ENCODE measurements at regions of chr2 and their contacts with region 1.

Region 1: GRCh38 chr2:109486711-109487535 is 126.8 kb downstream of the SEPTIN10 start:
- DNase-seq: peak; percentile 67
- H3K4me3 ChIP-seq: no peak overlapping the region
- H3K27ac ChIP-seq: peak overlapping the region; percentile 75
- H3K4me1 ChIP-seq: peaks cover 33% of the 10 kb centered on the region
- H3K27me3 ChIP-seq: no peaks in the 10 kb centered on the region
- CTCF ChIP-seq: no peak
- POLR2A ChIP-seq: no peak

Region 2: DNA sequence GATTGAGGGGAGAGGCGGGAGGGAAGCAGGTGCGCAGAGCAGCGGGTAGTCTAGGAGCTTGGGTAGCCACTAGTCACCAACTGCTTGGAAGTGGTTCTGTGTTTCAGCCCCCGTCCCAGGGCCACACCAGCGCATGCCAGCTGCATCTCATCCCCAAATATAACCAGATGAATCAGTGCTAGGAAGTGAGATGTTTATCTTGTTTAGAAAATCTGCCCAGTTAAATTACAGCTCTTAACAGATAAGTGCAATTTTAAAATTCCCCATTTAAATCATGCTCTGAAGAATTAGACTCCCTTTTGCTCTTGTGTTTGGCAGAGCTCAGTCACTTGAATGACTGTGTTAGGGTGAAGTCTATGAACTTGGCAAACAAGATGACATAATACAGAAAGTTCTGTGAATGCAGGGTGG is 67.0 kb before region 1 on chr2:
- CTCF ChIA-PET with region 1: no interaction called
- POLR2A ChIA-PET with region 1: no interaction called
- dilution Hi-C with region 1: no loop called
- intact Hi-C with region 1: no loop called
- DNase-seq: peak; percentile 43
- H3K4me3 ChIP-seq: no peak overlapping the region
- H3K27ac ChIP-seq: no peak overlapping the region
- H3K4me1 ChIP-seq: peaks cover 3% of the 10 kb centered on the region
- H3K27me3 ChIP-seq: no peaks in the 10 kb centered on the region
- CTCF ChIP-seq: no peak
- POLR2A ChIP-seq: no peak

Region 3: GRCh38 chr2:109438773-109439389 is 48.0 kb before region 1 on chr2:
- CTCF ChIA-PET with region 1: no interaction called
- POLR2A ChIA-PET with region 1: no interaction called
- dilution Hi-C with region 1: no loop called
- intact Hi-C with region 1: no loop called
- DNase-seq: no peak
- H3K4me3 ChIP-seq: no peak overlapping the region
- H3K27ac ChIP-seq: no peak overlapping the region
- H3K4me1 ChIP-seq: no peaks in the 10 kb centered on the region
- H3K27me3 ChIP-seq: no peaks in the 10 kb centered on the region
- CTCF ChIP-seq: no peak
- POLR2A ChIP-seq: no peak

Region 4: DNA sequence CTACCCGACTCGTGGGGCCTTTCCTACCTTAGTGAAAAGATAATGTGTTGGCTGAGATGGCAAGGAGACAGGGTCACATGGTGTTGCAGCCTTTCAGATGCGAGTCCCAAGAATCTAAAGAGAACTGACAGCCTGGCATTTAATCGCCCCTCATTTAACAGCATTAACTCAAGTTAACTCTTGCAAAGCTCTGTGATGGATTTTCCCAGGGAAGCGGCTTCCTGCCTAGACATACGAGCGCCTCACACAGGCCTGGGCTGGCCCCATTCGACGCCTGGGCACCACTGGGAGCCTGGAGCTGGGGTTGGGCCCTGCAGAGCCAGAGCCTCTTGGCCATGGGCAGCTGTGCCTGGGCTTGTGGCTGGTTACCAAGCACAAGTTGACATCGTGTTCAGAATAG is 13.9 kb before region 1 on chr2:
- CTCF ChIA-PET with region 1: interaction called, 37 read pairs
- POLR2A ChIA-PET with region 1: interaction called, 7 read pairs
- dilution Hi-C with region 1: no loop called
- intact Hi-C with region 1: no loop called
- DNase-seq: no peak
- H3K4me3 ChIP-seq: no peak overlapping the region
- H3K27ac ChIP-seq: no peak overlapping the region
- H3K4me1 ChIP-seq: peaks cover 21% of the 10 kb centered on the region
- H3K27me3 ChIP-seq: no peaks in the 10 kb centered on the region
- CTCF ChIP-seq: no peak
- POLR2A ChIP-seq: no peak

Region 5: DNA sequence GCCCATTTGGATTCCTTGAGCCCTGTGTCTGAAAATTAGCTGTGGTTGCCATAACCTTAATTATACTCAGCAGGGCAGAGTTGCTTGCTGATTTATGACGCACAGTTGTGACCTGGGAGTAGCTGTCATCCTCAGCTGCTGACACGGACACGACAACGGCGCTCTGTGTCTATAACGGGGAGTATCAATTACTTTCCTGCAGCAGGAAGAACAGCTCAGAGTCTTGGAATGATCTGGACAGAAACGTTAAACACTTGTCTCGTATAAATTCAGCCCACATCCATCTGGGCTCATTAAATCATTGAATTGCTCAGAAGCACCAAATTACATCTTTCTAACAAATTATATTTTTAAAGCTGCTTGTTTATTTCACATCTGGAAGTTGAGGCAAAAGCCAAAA is 10.5 kb after region 1 on chr2:
- CTCF ChIA-PET with region 1: interaction called, 5 read pairs
- POLR2A ChIA-PET with region 1: no interaction called
- dilution Hi-C with region 1: no loop called
- intact Hi-C with region 1: loop called (anchors 1 kb)
- DNase-seq: peak; percentile 60
- H3K4me3 ChIP-seq: no peak overlapping the region
- H3K27ac ChIP-seq: peak overlapping the region; percentile 74
- H3K4me1 ChIP-seq: peaks cover 19% of the 10 kb centered on the region
- H3K27me3 ChIP-seq: no peaks in the 10 kb centered on the region
- CTCF ChIP-seq: no peak
- POLR2A ChIP-seq: no peak

Region 6: DNA sequence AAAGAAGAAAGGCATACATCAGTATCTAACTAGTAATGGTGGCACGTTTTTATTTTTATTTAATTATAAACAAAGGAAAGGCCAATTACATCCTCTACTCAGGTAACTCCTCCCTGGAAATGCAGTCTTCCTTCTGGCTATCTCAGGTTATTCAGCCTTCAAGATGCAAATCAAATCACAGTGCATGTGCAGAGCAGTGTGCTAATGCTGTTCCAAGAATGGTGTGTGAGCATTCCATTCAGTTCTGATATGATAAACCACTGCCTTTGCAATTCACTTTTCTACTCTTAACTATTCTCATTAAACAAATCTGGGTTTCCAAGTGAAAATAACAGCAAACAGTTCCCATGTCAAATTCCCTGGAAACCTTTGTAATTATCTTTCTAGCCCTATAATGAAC is 88.5 kb after region 1 on chr2:
- CTCF ChIA-PET with region 1: no interaction called
- POLR2A ChIA-PET with region 1: no interaction called
- dilution Hi-C with region 1: no loop called
- intact Hi-C with region 1: no loop called
- DNase-seq: no peak
- H3K4me3 ChIP-seq: no peak overlapping the region
- H3K27ac ChIP-seq: no peak overlapping the region
- H3K4me1 ChIP-seq: no peaks in the 10 kb centered on the region
- H3K27me3 ChIP-seq: no peaks in the 10 kb centered on the region
- CTCF ChIP-seq: no peak
- POLR2A ChIP-seq: no peak

Measured in endothelial cell of umbilical vein (primary cell).